ENCODE measurements at regions of chr2 and their contacts with region 1.

Region 1: DNA sequence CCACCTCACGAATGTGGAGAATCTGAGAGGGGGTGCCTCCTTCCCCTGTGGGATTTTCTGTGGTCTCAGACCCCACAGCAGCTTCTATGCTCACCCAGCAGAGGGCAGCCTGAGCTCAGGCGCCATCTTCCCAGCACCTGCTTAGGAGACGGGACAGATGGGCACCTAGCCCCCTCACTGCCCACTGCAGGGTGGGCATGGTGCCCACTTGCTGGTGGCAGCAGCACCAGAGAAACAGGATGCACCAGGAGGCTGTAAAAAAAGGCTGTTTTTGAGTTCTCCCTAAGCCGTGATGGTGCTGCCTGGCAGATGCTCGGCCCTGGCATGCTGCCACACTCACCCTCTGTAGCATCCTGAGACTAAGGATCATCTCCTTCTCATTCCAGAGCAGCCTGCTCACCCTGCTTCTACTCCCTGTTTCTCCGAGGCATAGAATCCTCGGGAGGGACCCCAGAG is 19.1 kb upstream of the SLC20A1 start:
- DNase-seq: peak; percentile 79
- ATAC-seq: peak; percentile 50
- H3K4me3 Mint-ChIP-seq: peak overlapping the region; percentile 30
- H3K27ac Mint-ChIP-seq: peak overlapping the region; percentile 85
- H3K4me1 Mint-ChIP-seq: peaks cover 78% of the 10 kb centered on the region
- H3K27me3 Mint-ChIP-seq: peaks cover 4% of the 10 kb centered on the region

Region 2: GRCh38 chr2:112601751-112602150 is 24.9 kb before region 1 on chr2:
- CTCF ChIA-PET with region 1: interaction called, 51 read pairs
- POLR2A ChIA-PET with region 1: interaction called, 3 read pairs
- DNase-seq: no peak
- ATAC-seq: no peak
- H3K4me3 Mint-ChIP-seq: no peak overlapping the region
- H3K27ac Mint-ChIP-seq: no peak overlapping the region
- H3K4me1 Mint-ChIP-seq: peaks cover 5% of the 10 kb centered on the region
- H3K27me3 Mint-ChIP-seq: no peaks in the 10 kb centered on the region

Region 3: GRCh38 chr2:112645310-112646101 is 18.9 kb after region 1 on chr2 and contains the start of gene SLC20A1:
- CTCF ChIA-PET with region 1: interaction called, 133 read pairs
- POLR2A ChIA-PET with region 1: interaction called, 45 read pairs
- DNase-seq: peak; percentile 97
- ATAC-seq: peak; percentile 94
- H3K4me3 Mint-ChIP-seq: peak within 1 kb of the TSS; percentile 92
- H3K27ac Mint-ChIP-seq: peak within 1 kb of the TSS; percentile 90
- H3K4me1 Mint-ChIP-seq: peaks cover 65% of the 10 kb centered on the region
- H3K27me3 Mint-ChIP-seq: peaks cover 3% of the 10 kb centered on the region
- total RNA-seq, gene SLC20A1: 115 to 120 TPM

Region 4: DNA sequence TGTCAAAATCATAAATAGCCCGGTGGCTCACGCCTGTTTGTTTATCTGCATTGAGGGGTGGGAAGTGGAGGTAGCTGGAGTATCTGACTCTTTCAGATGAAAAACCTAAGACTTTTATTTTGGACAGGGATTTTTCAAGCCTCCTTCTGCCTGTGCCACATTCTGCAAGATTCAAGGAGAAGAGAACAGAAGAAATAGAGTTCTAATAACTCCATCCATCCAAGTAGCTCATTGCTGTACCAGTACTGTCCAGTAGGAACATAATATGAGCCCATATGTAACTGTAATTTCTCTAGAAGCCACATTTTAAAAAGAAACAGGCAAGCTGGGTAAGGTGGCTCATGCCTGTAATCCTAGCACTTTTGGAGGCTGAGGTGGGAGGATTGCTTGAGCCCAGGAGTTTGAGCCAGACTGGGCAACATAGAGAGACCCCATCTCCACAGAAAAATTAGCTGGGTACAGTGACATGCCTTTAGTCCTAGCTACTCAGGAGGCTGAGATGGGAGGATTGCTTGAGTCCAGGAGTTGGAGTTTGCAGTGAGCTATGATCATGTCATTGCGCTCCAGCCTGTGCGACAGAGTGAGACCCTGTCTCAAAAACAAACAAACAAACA is 58.7 kb after region 1 on chr2:
- CTCF ChIA-PET with region 1: interaction called, 109 read pairs
- POLR2A ChIA-PET with region 1: interaction called, 3 read pairs
- DNase-seq: no peak
- ATAC-seq: peak; percentile 45
- H3K4me3 Mint-ChIP-seq: no peak overlapping the region
- H3K27ac Mint-ChIP-seq: no peak overlapping the region
- H3K4me1 Mint-ChIP-seq: peaks cover 22% of the 10 kb centered on the region
- H3K27me3 Mint-ChIP-seq: peaks cover 13% of the 10 kb centered on the region

Region 5: GRCh38 chr2:112692496-112692911 is 65.9 kb after region 1 on chr2:
- CTCF ChIA-PET with region 1: interaction called, 109 read pairs
- POLR2A ChIA-PET with region 1: interaction called, 9 read pairs
- DNase-seq: peak; percentile 83
- ATAC-seq: peak; percentile 94
- H3K4me3 Mint-ChIP-seq: no peak overlapping the region
- H3K27ac Mint-ChIP-seq: peak overlapping the region; percentile 83
- H3K4me1 Mint-ChIP-seq: peaks cover 37% of the 10 kb centered on the region
- H3K27me3 Mint-ChIP-seq: peaks cover 16% of the 10 kb centered on the region

Region 6: GRCh38 chr2:112699984-112700667 is 73.5 kb after region 1 on chr2:
- CTCF ChIA-PET with region 1: interaction called, 24 read pairs
- POLR2A ChIA-PET with region 1: no interaction called
- DNase-seq: no peak
- ATAC-seq: no peak
- H3K4me3 Mint-ChIP-seq: no peak overlapping the region
- H3K27ac Mint-ChIP-seq: no peak overlapping the region
- H3K4me1 Mint-ChIP-seq: peaks cover 12% of the 10 kb centered on the region
- H3K27me3 Mint-ChIP-seq: peaks cover 44% of the 10 kb centered on the region

Region 7: DNA sequence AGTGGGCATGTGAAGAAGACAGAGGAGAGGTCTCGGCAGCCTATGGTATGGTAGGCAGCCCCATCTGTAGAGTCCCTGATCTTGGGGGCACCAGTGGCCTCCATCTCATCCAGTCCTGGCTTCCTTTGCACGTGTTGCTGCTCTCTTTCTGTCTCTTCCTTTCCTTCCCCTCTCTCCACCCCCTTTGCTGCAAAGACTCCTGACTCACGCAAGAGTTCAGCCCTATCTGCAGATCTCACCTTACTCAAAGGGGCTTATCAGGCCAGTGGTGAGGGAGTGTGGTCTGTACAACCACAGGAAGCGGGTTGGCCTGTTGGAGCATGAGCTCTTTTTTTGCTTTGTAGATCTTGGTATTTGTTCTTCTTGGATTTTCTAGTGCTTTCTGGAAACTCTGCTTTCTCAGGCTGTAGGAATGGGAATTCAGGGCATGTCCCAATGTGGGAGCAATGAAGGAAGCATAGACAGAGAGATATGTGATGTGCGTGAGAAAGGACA is 79.6 kb after region 1 on chr2:
- CTCF ChIA-PET with region 1: interaction called, 24 read pairs
- POLR2A ChIA-PET with region 1: no interaction called
- DNase-seq: peak; percentile 94
- ATAC-seq: peak; percentile 98
- H3K4me3 Mint-ChIP-seq: peak overlapping the region; percentile 58
- H3K27ac Mint-ChIP-seq: peak overlapping the region; percentile 71
- H3K4me1 Mint-ChIP-seq: peaks cover 41% of the 10 kb centered on the region
- H3K27me3 Mint-ChIP-seq: peaks cover 33% of the 10 kb centered on the region

Region 8: DNA sequence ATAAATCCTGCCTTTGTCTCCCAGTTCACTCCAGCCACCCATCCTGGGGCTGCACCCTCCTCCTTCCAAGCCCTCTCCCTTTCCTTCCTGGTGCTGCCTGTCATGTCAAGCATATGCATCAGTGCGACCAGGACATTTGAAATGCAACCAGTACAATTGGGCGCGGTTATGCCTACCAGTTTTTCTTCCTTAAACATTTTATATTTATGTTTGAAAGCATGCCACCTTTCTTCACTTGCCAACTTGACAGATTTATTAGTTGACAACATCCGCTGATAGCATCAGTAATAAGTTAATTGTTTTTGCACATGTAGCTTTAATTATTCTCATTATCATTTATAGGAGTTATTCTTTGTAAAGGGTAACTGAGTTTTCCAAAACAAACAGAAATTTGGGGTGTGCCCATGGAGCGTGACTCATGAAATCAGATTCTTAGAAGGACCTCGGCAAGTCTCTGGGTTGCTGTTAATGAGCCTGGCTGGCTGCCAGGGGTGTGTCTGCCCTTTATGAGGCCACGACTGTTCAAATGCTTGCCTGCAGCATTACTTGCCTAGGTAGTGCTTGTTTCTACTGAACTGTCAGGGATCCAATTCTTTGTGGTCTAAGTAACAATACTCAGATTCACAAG is 242.7 kb after region 1 on chr2:
- CTCF ChIA-PET with region 1: no interaction called
- POLR2A ChIA-PET with region 1: no interaction called
- DNase-seq: no peak
- ATAC-seq: no peak
- H3K4me3 Mint-ChIP-seq: no peak overlapping the region
- H3K27ac Mint-ChIP-seq: no peak overlapping the region
- H3K4me1 Mint-ChIP-seq: peaks cover 2% of the 10 kb centered on the region
- H3K27me3 Mint-ChIP-seq: peaks cover 52% of the 10 kb centered on the region

Measured in activated CD8-positive, alpha-beta T cell treated with anti-CD3 and anti-CD28 coated beads, Interleukin-2, amount 10 ng/mL, durations not matched to agents 7 days and 5 days (primary cell).